ENCODE measurements at regions of chr17 and their contacts with region 1.

Region 1: GRCh38 chr17:72725433-72726068 is 366.9 kb downstream of the SLC39A11 start:
- DNase-seq: peak in 4 of 5 donors; percentile 12 to 55 (median 34)
- H3K4me3 ChIP-seq: no peak overlapping the region
- H3K27ac ChIP-seq: no peak overlapping the region
- H3K4me1 ChIP-seq: no peaks in the 10 kb centered on the region
- H3K27me3 ChIP-seq: no peaks in the 10 kb centered on the region
- CTCF ChIP-seq: no peak
- EP300 ChIP-seq: no peak
- POLR2A ChIP-seq: no peak

Region 2: GRCh38 chr17:72705905-72706395 is 19.6 kb before region 1 on chr17:
- intact Hi-C with region 1: no loop called
- DNase-seq: no peak
- H3K4me3 ChIP-seq: no peak overlapping the region
- H3K27ac ChIP-seq: no peak overlapping the region
- H3K4me1 ChIP-seq: no peaks in the 10 kb centered on the region
- H3K27me3 ChIP-seq: no peaks in the 10 kb centered on the region
- CTCF ChIP-seq: no peak
- EP300 ChIP-seq: no peak
- POLR2A ChIP-seq: no peak

Region 3: DNA sequence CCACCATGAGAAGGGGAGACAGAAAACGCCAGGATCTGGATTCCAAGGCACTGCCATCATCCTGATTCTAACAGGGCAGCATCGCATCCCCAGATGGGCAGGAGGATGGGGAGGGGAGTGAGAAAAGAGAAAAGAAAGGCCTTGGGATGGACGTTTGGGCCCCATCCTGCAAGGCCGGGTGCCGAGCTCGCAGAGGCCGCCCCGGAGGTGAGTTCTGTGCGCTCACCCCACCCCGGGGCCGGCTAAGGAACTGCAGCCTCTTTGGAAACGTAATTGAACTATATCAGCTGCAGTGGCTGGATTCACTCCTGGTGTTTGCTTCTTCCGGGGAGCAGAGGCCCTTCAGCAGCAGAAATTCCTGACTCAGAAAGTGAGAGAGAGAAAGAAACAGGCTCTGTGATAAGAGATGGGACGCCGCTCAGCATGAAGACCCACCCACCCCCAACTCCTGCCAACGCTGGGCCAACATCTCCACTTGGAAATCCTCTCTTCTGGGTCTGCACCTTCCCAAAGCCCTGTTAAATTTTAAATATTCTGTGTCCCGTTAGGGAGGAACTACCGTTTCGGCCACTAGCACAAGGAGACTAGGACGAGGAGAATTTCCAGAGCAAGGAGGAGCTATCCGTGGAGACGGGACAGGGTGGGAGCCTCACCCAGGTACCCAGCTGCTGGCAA is 430.8 kb after region 1 on chr17:
- intact Hi-C with region 1: loop called in 2 of 4 experiments (anchors 10 kb)
- DNase-seq: peak; percentile 46 to 80 (median 69)
- H3K4me3 ChIP-seq: no peak overlapping the region
- H3K27ac ChIP-seq: no peak overlapping the region
- H3K4me1 ChIP-seq: peaks cover 4% of the 10 kb centered on the region
- H3K27me3 ChIP-seq: no peaks in the 10 kb centered on the region
- CTCF ChIP-seq: peak; percentile 28 to 58 (median 47)
- EP300 ChIP-seq: no peak
- POLR2A ChIP-seq: no peak

Region 4: DNA sequence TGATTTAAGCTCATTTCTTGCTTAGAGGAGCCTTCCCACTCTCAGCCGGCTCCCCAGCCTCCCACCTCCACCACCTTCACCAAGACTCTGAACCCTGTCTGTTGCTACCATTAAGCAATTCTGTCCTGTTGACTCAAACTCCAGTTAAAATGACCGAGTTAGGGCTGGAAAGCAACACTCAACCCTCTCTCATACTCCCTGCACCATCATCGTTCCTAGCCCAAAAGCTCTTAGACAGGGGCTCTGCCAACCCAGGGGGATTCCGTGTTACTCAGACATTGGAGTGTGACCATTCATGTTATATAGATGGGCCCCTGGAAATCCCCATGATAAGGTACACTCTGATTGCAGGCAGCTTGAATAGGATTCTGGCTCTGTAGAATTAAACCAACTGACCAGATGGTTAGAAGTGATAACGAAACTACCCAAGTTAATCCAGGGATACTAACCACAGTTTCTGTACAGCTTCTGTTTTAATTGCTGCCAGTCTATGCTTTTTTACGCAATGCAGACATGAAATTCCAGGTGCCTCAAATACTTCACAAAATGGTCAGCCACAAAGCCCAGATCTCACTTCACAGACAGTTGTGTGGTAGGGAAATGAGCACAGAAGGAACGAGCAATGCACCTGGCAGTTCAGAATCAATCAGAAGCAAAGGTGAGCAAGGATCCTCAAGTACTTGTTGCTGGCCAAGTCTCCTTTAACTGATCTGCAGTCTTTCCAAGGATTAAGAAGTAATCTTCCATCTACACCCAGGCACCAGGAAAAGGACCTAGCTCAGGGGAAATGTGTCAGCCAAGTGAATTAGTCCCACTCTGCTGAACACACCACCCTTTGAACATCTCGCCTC is 441.4 kb after region 1 on chr17:
- intact Hi-C with region 1: loop called in 1 of 4 experiments (anchors 10 kb)
- DNase-seq: no peak
- H3K4me3 ChIP-seq: no peak overlapping the region
- H3K27ac ChIP-seq: no peak overlapping the region
- H3K4me1 ChIP-seq: peaks cover 2% of the 10 kb centered on the region
- H3K27me3 ChIP-seq: no peaks in the 10 kb centered on the region
- CTCF ChIP-seq: no peak
- EP300 ChIP-seq: no peak
- POLR2A ChIP-seq: no peak

Region 5: GRCh38 chr17:73231841-73232586 is 506.5 kb after region 1 on chr17:
- intact Hi-C with region 1: loop called in 1 of 4 experiments (anchors 10 kb)
- DNase-seq: peak; percentile 95 to 98 (median 97)
- H3K4me3 ChIP-seq: peak overlapping the region; percentile 78
- H3K27ac ChIP-seq: peak overlapping the region; percentile 23 to 71
- H3K4me1 ChIP-seq: peaks cover 7% of the 10 kb centered on the region
- H3K27me3 ChIP-seq: no peaks in the 10 kb centered on the region
- CTCF ChIP-seq: peak in 2 of 3 donors; percentile 41 to 70
- EP300 ChIP-seq: no peak
- POLR2A ChIP-seq: peak; percentile 55

Region 6: DNA sequence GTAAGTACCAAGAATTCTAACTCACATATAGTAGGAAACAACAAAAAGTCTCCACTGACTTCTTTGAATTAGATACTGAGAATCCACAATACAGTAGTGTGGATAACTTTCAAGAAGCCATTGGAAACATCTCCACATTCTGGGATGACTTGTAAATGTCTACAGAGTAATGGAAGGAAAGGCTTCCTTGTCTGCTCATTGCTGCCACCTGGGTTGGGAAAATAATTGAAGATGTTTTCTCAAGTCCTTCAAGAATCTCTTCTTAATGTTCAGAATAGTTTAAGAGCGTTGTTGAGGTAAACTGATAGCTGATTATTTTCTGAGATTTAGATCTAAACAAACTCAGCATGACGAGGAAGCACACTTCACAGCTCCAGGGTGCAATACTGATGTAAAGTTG is 522.2 kb after region 1 on chr17:
- intact Hi-C with region 1: loop called in 1 of 4 experiments (anchors 10 kb)
- DNase-seq: no peak
- H3K4me3 ChIP-seq: no peak overlapping the region
- H3K27ac ChIP-seq: no peak overlapping the region
- H3K4me1 ChIP-seq: no peaks in the 10 kb centered on the region
- H3K27me3 ChIP-seq: no peaks in the 10 kb centered on the region
- CTCF ChIP-seq: no peak
- EP300 ChIP-seq: no peak
- POLR2A ChIP-seq: no peak

Region 7: GRCh38 chr17:73371285-73371684 is 645.7 kb after region 1 on chr17:
- intact Hi-C with region 1: loop called in 1 of 4 experiments (anchors 10 kb)
- DNase-seq: no peak
- H3K4me3 ChIP-seq: no peak overlapping the region
- H3K27ac ChIP-seq: no peak overlapping the region
- H3K4me1 ChIP-seq: peaks cover 7% of the 10 kb centered on the region
- H3K27me3 ChIP-seq: no peaks in the 10 kb centered on the region
- CTCF ChIP-seq: no peak
- EP300 ChIP-seq: no peak
- POLR2A ChIP-seq: no peak

Measured in ovary (tissue), 10 donors.